Activated CD4-positive, alpha-beta memory T cell treated with anti-CD3 and anti-CD28 coated beads for 36 hours (primary cell): ENCODE measurements at regions of chr2 and their contacts with region 1.

Region 1: GRCh38 chr2:216034065-216034464 is 20.7 kb upstream of the MREG start:
- DNase-seq: peak; percentile 88
- H3K4me3 Mint-ChIP-seq: no peak overlapping the region
- H3K27ac Mint-ChIP-seq: no peak overlapping the region
- H3K4me1 Mint-ChIP-seq: peaks cover 39% of the 10 kb centered on the region
- H3K27me3 Mint-ChIP-seq: no peaks in the 10 kb centered on the region

Region 2: DNA sequence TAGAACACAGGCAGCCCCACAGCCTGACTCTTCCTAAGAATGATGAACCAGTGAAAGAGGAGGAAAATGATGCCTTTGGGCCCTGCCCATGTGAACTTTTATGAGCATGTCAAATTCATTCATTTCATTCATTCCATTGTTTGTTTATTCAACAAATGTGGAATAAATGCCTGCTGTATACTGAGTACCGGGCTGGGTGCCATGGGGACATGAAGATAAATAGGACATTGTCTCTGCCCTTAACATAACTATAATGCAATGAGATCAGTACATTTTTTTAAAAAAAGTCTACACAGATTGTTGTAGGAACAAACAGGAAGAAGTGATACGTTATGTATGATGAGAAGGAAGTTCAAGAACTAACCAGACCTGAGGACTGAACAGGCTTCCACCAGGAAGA is 35.4 kb before region 1 on chr2:
- CTCF ChIA-PET with region 1: no interaction called
- POLR2A ChIA-PET with region 1: no interaction called
- intact Hi-C with region 1: no loop called
- DNase-seq: no peak
- H3K4me3 Mint-ChIP-seq: no peak overlapping the region
- H3K27ac Mint-ChIP-seq: no peak overlapping the region
- H3K4me1 Mint-ChIP-seq: peaks cover 13% of the 10 kb centered on the region
- H3K27me3 Mint-ChIP-seq: no peaks in the 10 kb centered on the region

Region 3: DNA sequence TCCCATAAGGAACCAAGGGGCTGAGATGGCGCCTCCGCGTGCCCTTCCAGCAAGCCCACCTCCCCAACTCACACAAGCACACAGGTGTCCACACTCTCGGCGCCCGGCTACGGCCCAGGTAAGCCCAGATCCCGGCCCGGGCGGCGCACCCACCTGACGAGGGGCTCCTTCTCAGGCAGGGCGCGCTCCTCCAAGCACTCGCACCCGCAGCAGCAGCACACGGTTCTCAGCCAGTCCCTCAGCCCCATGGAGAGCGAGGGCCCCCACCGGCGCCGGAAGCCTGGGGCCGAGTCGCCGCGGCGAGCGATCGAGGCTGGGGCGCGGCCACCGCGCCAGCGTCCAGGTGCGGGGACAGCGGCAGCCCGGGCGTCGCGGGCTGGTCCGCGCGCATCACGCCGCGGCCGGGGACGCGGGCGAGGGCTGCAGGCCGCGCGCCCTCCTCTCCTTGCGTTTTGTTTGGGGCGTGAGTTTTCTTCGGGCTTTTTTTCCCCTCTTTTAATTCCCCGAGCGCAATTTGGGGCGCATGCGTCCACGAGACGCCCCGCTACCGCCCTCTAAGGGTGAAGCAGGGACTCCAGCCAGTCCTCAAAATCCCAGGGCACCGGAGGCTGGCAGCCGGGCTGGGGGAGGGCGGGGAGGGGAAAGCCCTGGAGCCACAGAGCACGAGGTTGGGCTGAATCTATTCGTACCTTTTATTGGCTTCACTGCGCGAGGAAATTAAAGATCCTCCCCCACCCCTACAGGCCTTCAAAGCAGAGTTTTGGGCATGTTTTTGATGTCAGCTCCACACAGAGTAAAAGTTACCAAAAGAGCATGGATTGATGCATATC is 20.8 kb before region 1 on chr2 and contains the start of gene MREG:
- CTCF ChIA-PET with region 1: interaction called, 18 read pairs
- POLR2A ChIA-PET with region 1: interaction called, 7 read pairs
- intact Hi-C with region 1: loop called (anchors 1 kb)
- DNase-seq: peak; percentile 91
- H3K4me3 Mint-ChIP-seq: peak within 1 kb of the TSS; percentile 88
- H3K27ac Mint-ChIP-seq: peak within 1 kb of the TSS; percentile 46
- H3K4me1 Mint-ChIP-seq: peaks cover 50% of the 10 kb centered on the region
- H3K27me3 Mint-ChIP-seq: no peaks in the 10 kb centered on the region
- total RNA-seq, gene MREG: 10.2 to 10.4 TPM

Region 4: DNA sequence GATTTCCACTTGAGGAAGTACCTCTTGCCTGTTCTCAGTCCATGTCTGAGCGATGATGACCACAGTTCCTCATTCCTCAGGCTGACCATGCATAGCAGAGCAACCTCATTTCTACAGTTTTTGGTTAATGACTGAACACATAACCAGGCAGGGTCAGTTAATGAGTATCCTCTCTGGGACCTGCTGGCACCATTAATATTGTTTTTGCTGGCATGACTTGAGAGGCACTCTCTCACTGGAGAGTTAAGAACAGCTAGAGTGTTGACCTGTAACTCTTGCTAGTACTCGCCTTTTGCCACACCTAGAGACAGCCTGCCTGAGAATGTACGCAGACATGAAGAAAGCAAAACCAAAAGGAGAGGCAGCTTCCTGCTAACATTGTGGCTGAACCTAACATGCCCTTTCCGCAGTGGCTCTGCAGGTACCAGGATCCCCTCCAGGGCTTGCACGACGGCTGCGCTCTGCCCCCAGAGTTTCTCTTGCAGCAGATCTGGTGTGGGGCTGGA is 23.7 kb after region 1 on chr2:
- CTCF ChIA-PET with region 1: interaction called, 33 read pairs
- POLR2A ChIA-PET with region 1: interaction called, 4 read pairs
- intact Hi-C with region 1: loop called (anchors 1 kb)
- DNase-seq: peak; percentile 63
- H3K4me3 Mint-ChIP-seq: peak overlapping the region; percentile 71
- H3K27ac Mint-ChIP-seq: peak overlapping the region; percentile 89
- H3K4me1 Mint-ChIP-seq: peaks cover 33% of the 10 kb centered on the region
- H3K27me3 Mint-ChIP-seq: no peaks in the 10 kb centered on the region

Region 5: GRCh38 chr2:216114714-216115557 is 80.9 kb after region 1 on chr2:
- CTCF ChIA-PET with region 1: interaction called, 32 read pairs
- POLR2A ChIA-PET with region 1: no interaction called
- intact Hi-C with region 1: loop called (anchors 1 kb)
- DNase-seq: peak; percentile 98
- H3K4me3 Mint-ChIP-seq: peak overlapping the region; percentile 86
- H3K27ac Mint-ChIP-seq: peak overlapping the region; percentile 100
- H3K4me1 Mint-ChIP-seq: peaks cover 93% of the 10 kb centered on the region
- H3K27me3 Mint-ChIP-seq: peaks cover 2% of the 10 kb centered on the region

Region 6: DNA sequence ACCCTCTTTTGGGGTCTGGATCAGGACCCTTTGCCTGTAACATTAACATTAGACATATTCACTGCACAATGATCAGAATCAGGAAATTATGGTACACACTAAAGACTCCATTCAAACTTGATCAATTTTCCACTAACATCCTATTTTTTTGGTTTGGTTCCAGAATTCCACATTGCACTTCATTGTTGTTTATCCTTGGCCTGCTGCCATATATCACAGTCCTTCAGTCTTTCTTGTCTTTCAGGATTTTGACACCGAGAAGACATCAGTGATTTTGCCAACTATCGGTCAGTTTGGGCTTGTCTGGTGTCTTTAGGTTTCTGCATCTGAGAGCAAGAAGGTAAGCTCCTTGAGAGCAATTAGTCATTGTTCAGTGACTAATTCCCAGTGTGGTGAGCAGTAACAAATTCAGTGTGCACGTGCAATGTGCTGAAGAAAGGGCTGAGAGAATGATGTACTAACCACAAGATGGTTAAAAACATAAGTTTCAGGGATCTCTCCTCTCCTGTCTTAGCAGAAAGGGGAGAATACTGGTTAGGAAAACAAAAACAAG is 314.8 kb after region 1 on chr2:
- CTCF ChIA-PET with region 1: no interaction called
- POLR2A ChIA-PET with region 1: no interaction called
- intact Hi-C with region 1: loop called (anchors 5 kb)
- DNase-seq: peak; percentile 52
- H3K4me3 Mint-ChIP-seq: no peak overlapping the region
- H3K27ac Mint-ChIP-seq: peak overlapping the region; percentile 36
- H3K4me1 Mint-ChIP-seq: peaks cover 66% of the 10 kb centered on the region
- H3K27me3 Mint-ChIP-seq: no peaks in the 10 kb centered on the region